Mammary epithelial cell (primary cell): ENCODE measurements at regions of chr7 and their contacts with region 1.

Region 1: GRCh38 chr7:99631295-99632109 is 14.8 kb downstream of the ZSCAN25 start:
- DNase-seq: peak; percentile 79
- H3K4me3 ChIP-seq: no peak overlapping the region
- H3K27ac ChIP-seq: peak overlapping the region; percentile 8
- H3K4me1 ChIP-seq: peaks cover 22% of the 10 kb centered on the region
- H3K27me3 ChIP-seq: no peaks in the 10 kb centered on the region
- CTCF ChIP-seq: peak; percentile 56 to 75

Region 2: DNA sequence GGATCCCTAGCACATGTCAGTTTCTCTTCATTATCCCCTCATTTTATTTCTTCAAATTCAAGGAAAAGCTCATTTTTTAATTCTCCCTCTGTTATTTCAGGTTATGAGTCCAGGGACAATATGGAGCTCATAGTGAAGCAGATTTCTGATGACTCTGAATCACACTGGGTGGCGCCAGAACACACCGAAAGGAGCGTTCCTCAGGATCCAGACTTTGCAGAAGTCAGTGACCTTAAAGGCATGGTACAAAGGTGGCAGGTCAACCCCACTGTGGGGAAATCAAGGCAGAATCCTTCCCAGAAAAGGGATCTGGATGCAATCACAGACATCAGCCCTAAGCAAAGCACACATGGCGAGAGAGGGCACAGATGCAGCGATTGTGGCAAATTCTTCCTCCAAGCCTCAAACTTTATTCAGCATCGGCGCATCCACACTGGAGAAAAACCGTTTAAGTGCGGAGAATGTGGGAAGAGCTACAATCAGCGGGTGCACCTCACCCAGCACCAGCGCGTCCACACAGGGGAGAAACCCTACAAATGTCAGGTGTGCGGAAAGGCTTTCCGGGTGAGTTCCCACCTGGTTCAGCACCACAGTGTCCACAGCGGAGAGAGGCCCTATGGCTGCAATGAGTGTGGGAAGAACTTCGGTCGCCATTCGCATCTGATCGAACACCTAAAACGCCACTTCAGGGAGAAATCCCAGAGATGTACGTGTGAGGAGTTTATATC is 105.6 kb before region 1 on chr7:
- CTCF ChIA-PET with region 1: no interaction called
- dilution Hi-C with region 1: no loop called
- in situ Hi-C with region 1: no loop called
- intact Hi-C with region 1: loop called (anchors 5 kb)
- DNase-seq: no peak
- H3K4me3 ChIP-seq: no peak overlapping the region
- H3K27ac ChIP-seq: no peak overlapping the region
- H3K4me1 ChIP-seq: no peaks in the 10 kb centered on the region
- H3K27me3 ChIP-seq: no peaks in the 10 kb centered on the region
- CTCF ChIP-seq: peak; percentile 19 to 46

Region 3: DNA sequence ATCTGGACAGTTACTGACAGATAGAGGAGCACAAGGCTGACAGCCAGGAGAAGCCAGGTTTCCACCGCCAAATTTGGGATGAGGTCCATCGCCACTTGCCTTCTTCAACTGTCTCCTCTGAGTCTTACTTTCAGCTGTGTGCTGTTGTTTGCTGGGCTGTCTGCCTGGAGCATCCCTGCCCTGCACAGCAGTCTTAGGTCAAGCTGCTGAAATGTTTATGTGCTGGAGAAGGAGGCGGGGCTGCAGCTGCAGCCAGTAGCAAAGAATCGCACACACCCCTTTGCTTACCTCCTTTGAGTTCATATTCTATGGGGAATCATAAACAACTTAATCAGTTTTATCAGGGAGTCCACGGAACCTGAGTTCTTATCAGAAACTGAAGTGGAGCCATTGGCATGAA is 68.4 kb after region 1 on chr7:
- CTCF ChIA-PET with region 1: no interaction called
- dilution Hi-C with region 1: no loop called
- in situ Hi-C with region 1: no loop called
- intact Hi-C with region 1: no loop called
- DNase-seq: no peak
- H3K4me3 ChIP-seq: no peak overlapping the region
- H3K27ac ChIP-seq: no peak overlapping the region
- H3K4me1 ChIP-seq: peaks cover 9% of the 10 kb centered on the region
- H3K27me3 ChIP-seq: no peaks in the 10 kb centered on the region
- CTCF ChIP-seq: no peak

Region 4: DNA sequence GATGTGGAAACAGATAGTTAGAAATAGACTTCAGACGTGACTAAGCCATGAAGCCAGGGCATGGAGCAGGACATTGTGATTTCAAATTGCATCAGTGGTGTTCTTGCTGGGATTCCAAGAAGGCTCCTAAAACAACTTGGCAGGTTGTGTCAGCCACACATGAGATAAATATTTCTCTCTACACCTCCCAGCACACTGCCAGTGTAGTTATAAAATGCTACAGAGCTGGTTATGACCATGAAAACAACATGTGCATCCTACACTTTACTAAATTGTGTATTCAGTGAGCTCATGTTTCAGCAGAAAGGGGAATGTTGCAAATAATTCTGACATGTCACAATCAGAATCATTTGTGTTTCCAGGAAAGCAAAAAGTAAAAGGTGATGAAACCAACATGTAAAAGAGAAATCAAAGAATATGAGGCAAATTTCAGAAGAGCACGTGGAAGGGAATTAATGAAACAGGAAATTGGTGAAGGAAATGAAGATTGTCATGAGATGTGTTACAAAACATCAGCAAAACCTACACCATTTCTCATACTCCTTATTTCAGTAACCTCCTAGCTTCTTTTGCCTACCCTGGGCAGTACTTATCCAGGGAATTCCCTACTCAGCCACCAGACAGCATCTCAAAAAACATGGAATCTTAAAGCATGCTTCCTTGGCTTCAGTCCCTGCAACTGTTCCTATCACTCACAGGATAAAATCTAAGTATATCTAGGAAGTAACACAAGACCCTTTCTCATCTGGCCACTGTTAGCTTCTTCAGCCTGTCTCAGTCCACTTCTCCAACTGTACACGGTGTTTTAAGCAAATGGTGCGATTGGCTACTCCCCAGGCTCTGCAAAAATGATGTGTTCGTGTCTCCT is 109.3 kb after region 1 on chr7:
- CTCF ChIA-PET with region 1: no interaction called
- dilution Hi-C with region 1: no loop called
- in situ Hi-C with region 1: no loop called
- intact Hi-C with region 1: loop called (anchors 5 kb)
- DNase-seq: peak; percentile 70
- H3K4me3 ChIP-seq: no peak overlapping the region
- H3K27ac ChIP-seq: no peak overlapping the region
- H3K4me1 ChIP-seq: peaks cover 30% of the 10 kb centered on the region
- H3K27me3 ChIP-seq: no peaks in the 10 kb centered on the region
- CTCF ChIP-seq: no peak

Region 5: DNA sequence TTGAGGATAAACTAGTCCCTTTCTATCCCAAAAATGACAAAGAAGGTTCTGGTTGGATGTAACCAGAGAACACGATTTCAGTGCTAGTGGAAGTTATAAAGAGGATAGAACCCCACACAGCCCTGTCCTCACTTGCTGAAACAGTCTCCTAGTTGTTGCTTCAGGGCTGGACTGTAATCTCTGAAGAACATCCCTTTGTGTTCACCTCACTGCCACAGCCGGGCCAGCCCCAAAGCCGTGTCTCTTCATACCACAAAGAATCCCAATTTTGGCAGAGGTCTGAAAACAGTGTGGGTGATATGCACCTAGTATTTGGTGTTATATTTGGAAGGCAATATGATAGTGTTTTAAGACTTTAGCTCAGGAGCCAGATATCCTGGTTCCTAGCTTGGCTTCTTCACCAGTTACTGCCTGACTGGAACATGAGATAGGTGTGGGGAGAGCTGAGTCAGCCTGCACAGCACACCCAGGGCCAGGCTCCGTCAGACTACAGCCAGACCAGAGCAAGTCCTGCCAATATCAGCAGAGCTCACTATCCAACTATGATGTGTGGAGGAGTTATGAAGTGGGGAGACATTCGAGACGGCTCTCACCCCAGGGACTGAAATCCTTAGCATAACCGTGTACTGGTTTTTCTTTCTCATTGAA is 131.3 kb after region 1 on chr7:
- CTCF ChIA-PET with region 1: no interaction called
- dilution Hi-C with region 1: no loop called
- in situ Hi-C with region 1: no loop called
- intact Hi-C with region 1: loop called (anchors 10 kb)
- DNase-seq: peak; percentile 87
- H3K4me3 ChIP-seq: no peak overlapping the region
- H3K27ac ChIP-seq: peak overlapping the region; percentile 12
- H3K4me1 ChIP-seq: peaks cover 16% of the 10 kb centered on the region
- H3K27me3 ChIP-seq: no peaks in the 10 kb centered on the region
- CTCF ChIP-seq: no peak

Region 6: DNA sequence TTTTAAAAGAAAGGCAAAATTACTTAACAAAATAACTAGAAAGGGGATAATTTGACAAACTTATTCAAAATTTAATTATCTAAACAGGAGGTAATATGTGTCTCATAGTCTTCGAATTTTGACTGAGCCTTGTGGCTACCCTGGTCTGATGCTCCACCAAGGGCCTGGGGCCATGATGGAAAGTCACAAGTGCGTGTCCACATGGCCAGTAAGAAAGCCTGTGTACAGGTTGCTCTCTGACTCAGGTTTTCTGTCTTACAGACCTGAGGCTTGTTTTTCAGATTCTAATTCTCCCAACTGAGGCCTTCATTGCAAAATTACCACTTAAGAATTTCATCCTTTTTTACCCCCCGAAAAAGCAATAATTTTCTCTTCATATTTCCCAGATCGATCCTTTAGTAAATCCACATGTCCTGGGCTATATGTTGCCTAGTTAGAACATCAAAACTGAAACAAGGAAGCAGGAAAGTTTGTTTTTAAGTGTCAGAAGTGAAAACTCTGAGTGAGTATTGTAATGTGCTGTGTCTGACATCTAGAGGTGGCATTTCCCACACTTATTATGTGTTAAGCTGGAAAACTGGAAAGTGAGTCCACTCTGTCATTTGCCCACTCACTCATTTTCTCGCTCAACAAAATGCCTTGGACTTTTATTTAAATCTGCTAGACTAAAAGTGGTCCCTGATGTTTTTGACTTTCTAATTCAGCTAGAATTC is 206.3 kb after region 1 on chr7:
- CTCF ChIA-PET with region 1: no interaction called
- dilution Hi-C with region 1: no loop called
- in situ Hi-C with region 1: loop called in 1 of 2 experiments (anchors 25 kb)
- intact Hi-C with region 1: loop called (anchors 1 kb)
- DNase-seq: peak; percentile 16
- H3K4me3 ChIP-seq: no peak overlapping the region
- H3K27ac ChIP-seq: no peak overlapping the region
- H3K4me1 ChIP-seq: peaks cover 3% of the 10 kb centered on the region
- H3K27me3 ChIP-seq: no peaks in the 10 kb centered on the region
- CTCF ChIP-seq: peak; percentile 25 to 61

Region 7: DNA sequence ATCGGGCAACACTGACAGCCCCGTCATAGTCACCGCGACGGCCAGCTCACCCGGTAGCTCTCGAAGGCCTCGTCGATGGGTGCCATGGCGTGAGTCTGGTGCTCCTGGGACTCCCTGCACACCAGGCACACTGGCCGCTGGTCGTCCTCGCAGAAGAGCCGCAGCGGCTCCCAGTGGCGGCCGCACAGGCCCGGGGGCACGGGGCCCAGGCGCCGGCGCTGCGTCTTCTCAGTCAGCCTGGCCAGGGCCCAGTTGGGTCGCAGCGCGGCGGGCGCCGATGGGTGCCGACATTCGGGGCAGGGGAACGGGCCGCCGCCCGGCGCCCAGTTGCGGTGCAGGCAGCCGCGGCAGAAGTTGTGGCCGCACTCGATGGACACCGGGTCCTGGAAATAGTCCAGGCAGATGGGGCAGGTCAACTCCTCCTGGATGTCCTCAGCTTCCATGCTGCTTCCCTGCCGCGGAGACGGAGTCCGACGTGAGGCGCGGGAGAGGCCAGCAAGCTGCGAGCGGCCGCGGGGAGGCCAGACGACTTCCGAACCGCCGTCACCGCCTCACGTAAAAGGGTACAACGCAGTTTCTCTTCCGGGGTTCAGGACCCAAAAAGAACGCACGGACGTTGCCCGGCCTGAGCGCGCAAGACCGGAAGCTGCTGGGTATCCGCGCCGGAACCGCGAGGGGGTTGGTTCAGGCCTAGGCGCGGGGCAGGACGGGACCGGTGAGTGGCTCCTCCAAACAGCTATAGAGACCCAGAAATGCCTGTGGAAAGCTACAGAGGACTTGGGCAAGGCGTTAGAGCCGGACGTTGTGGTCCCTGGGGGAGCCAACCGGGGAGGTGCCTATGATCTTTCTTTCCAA is 287.7 kb after region 1 on chr7 and contains the start of gene TRIM4:
- CTCF ChIA-PET with region 1: no interaction called
- dilution Hi-C with region 1: no loop called
- in situ Hi-C with region 1: no loop called
- intact Hi-C with region 1: loop called (anchors 5 kb)
- DNase-seq: peak; percentile 94
- H3K4me3 ChIP-seq: peak within 1 kb of the TSS; percentile 79 to 90 (median 86)
- H3K27ac ChIP-seq: peak within 1 kb of the TSS; percentile 73
- H3K4me1 ChIP-seq: peaks cover 26% of the 10 kb centered on the region
- H3K27me3 ChIP-seq: no peaks in the 10 kb centered on the region
- CTCF ChIP-seq: peak; percentile 5 to 49
- total RNA-seq, gene TRIM4: 23.2 to 24.5 TPM

Region 8: GRCh38 chr7:99990460-99990852 is 359.0 kb after region 1 on chr7:
- CTCF ChIA-PET with region 1: no interaction called
- dilution Hi-C with region 1: no loop called
- in situ Hi-C with region 1: no loop called
- intact Hi-C with region 1: loop called (anchors 1 kb)
- DNase-seq: no peak
- H3K4me3 ChIP-seq: no peak overlapping the region
- H3K27ac ChIP-seq: no peak overlapping the region
- H3K4me1 ChIP-seq: peaks cover 5% of the 10 kb centered on the region
- H3K27me3 ChIP-seq: no peaks in the 10 kb centered on the region
- CTCF ChIP-seq: no peak